CD4-positive, alpha-beta T cell (primary cell): ENCODE measurements at regions of chr11 and their contacts with region 1.

Region 1: DNA sequence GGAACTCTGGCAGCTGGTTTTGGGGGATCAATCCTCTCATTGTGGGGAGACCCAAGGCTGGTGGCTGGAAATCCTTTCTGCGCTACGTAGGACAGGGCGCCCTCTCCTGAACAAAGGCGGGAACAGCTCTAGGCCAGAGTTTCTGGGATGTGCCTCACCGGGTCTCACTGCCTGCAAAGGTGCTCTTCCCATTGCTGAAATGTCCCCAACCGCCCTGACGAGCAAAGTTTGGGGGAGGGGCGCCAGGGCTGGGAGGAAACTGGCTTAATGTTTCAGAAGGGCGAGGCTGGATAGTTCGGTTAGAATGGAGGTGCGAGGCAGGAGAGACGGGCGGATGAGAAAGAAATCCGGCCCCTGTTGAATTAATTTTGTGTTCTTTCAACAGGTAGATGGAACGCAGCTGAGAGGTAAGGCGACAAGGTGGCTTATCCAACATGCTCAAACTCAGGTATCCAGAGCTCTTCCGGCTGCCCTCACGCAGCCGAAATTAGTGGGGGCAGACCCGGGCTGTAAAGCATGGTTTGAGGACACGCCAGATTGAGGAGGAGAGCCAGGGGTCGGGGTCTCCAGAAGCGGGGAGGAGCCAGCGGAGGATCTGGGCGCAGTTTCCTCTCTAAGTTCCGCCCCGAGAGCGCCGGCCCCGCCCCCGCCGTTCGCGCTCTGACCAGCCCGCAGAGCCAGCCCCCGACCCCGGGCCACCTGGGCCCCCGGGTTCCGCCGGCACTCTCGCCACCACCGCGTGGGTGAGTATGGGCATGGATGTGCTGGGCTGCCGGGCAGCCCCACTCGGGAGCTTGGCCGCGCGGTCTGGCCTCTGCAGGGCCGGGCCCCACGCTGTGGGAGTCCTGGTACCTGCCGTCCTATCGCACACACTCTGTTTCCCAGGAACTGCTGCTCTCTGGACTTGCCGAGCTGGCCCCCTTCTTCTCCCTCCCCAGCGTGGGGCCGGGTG is at the start of gene PGAP2:
- DNase-seq: peak; percentile 27 to 77 (median 52)
- ATAC-seq: peak; percentile 74
- H3K4me3 ChIP-seq: peak within 1 kb of the TSS; percentile 96
- H3K4me3 Mint-ChIP-seq: peak within 1 kb of the TSS; percentile 95
- H3K27ac ChIP-seq: peak within 1 kb of the TSS in 1 of 2 donors; percentile 76
- H3K27ac Mint-ChIP-seq: peak within 1 kb of the TSS; percentile 84
- H3K4me1 ChIP-seq: peaks cover 21% of the 10 kb centered on the region
- H3K4me1 Mint-ChIP-seq: peaks cover 24% of the 10 kb centered on the region
- H3K27me3 ChIP-seq: no peaks in the 10 kb centered on the region
- H3K27me3 Mint-ChIP-seq: no peaks in the 10 kb centered on the region
- CTCF ChIP-seq: peak; percentile 63
- total RNA-seq, gene PGAP2: 20.9 to 23.6 TPM

Region 2: GRCh38 chr11:2791521-2792380 is 1016.4 kb before region 1 on chr11:
- CTCF ChIA-PET with region 1: no interaction called
- POLR2A ChIA-PET with region 1: no interaction called
- intact Hi-C with region 1: no loop called
- DNase-seq: peak in 12 of 14 experiments; percentile 6 to 55 (median 38)
- ATAC-seq: peak; percentile 46
- H3K4me3 ChIP-seq: peak overlapping the region; percentile 51
- H3K4me3 Mint-ChIP-seq: peak overlapping the region; percentile 71
- H3K27ac ChIP-seq: no peak overlapping the region
- H3K27ac Mint-ChIP-seq: no peak overlapping the region
- H3K4me1 ChIP-seq: peaks cover 13% of the 10 kb centered on the region
- H3K4me1 Mint-ChIP-seq: peaks cover 5% of the 10 kb centered on the region
- H3K27me3 ChIP-seq: no peaks in the 10 kb centered on the region
- H3K27me3 Mint-ChIP-seq: no peaks in the 10 kb centered on the region
- CTCF ChIP-seq: no peak

Region 3: GRCh38 chr11:3773180-3773579 is 35.0 kb before region 1 on chr11:
- CTCF ChIA-PET with region 1: interaction called, 10 read pairs
- POLR2A ChIA-PET with region 1: interaction called, 3 read pairs
- intact Hi-C with region 1: loop called in 1 of 2 experiments (anchors 5 kb)
- DNase-seq: no peak
- ATAC-seq: no peak
- H3K4me3 ChIP-seq: no peak overlapping the region
- H3K4me3 Mint-ChIP-seq: no peak overlapping the region
- H3K27ac ChIP-seq: no peak overlapping the region
- H3K27ac Mint-ChIP-seq: no peak overlapping the region
- H3K4me1 ChIP-seq: no peaks in the 10 kb centered on the region
- H3K4me1 Mint-ChIP-seq: no peaks in the 10 kb centered on the region
- H3K27me3 ChIP-seq: no peaks in the 10 kb centered on the region
- H3K27me3 Mint-ChIP-seq: no peaks in the 10 kb centered on the region
- CTCF ChIP-seq: no peak

Region 4: DNA sequence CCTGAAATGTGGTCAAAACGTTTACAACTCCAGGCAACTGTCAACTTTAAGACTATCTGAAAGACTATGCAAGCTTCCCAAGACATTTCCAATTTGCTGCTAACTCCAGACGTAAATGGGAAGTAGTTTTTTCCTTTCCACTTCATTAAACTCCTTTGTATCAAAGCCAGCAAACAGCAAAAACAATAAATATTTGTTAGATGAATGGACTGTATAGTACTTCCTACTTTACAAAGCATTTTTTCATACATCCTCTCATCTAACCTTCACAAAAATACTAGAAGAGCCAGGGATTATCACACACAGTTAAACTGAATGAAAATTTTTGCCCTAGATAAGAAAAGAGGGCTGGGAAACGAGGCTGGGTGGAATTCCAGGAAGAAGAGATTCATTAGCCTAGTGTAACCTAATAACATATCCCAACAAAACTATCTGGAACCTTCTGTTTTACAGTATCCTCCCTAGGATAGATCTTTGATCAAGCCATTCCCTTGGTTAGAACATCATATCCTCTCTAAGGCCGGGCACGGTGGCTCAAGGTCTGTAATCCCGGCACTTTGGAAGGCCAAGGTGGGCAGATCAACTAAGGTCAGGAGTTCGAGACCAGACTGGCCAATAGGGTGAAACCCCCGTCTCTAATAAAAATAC is 21.3 kb before region 1 on chr11:
- CTCF ChIA-PET with region 1: interaction called, 37 read pairs
- POLR2A ChIA-PET with region 1: interaction called, 12 read pairs
- intact Hi-C with region 1: loop called in 1 of 2 experiments (anchors 1 kb)
- DNase-seq: no peak
- ATAC-seq: no peak
- H3K4me3 ChIP-seq: no peak overlapping the region
- H3K4me3 Mint-ChIP-seq: peak overlapping the region; percentile 22
- H3K27ac ChIP-seq: peak overlapping the region in 1 of 2 donors; percentile 23
- H3K27ac Mint-ChIP-seq: peak overlapping the region; percentile 85
- H3K4me1 ChIP-seq: peaks cover 52% of the 10 kb centered on the region
- H3K4me1 Mint-ChIP-seq: peaks cover 73% of the 10 kb centered on the region
- H3K27me3 ChIP-seq: no peaks in the 10 kb centered on the region
- H3K27me3 Mint-ChIP-seq: no peaks in the 10 kb centered on the region
- CTCF ChIP-seq: no peak

Region 5: GRCh38 chr11:3824714-3825472 is 16.7 kb after region 1 on chr11:
- CTCF ChIA-PET with region 1: interaction called, 11 read pairs
- POLR2A ChIA-PET with region 1: interaction called, 3 read pairs
- intact Hi-C with region 1: no loop called
- DNase-seq: peak; percentile 69 to 90 (median 80)
- ATAC-seq: peak; percentile 100
- H3K4me3 ChIP-seq: no peak overlapping the region
- H3K4me3 Mint-ChIP-seq: no peak overlapping the region
- H3K27ac ChIP-seq: peak overlapping the region in 1 of 2 donors; percentile 10
- H3K27ac Mint-ChIP-seq: peak overlapping the region; percentile 77
- H3K4me1 ChIP-seq: peaks cover 30% of the 10 kb centered on the region
- H3K4me1 Mint-ChIP-seq: peaks cover 38% of the 10 kb centered on the region
- H3K27me3 ChIP-seq: no peaks in the 10 kb centered on the region
- H3K27me3 Mint-ChIP-seq: no peaks in the 10 kb centered on the region
- CTCF ChIP-seq: peak; percentile 75

Region 6: GRCh38 chr11:3849297-3849874 is 41.2 kb after region 1 on chr11:
- CTCF ChIA-PET with region 1: interaction called, 18 read pairs
- POLR2A ChIA-PET with region 1: interaction called, 24 read pairs
- intact Hi-C with region 1: no loop called
- DNase-seq: peak in 7 of 14 experiments; percentile 34 to 82 (median 69)
- ATAC-seq: peak; percentile 47
- H3K4me3 ChIP-seq: no peak overlapping the region
- H3K4me3 Mint-ChIP-seq: peak overlapping the region; percentile 1
- H3K27ac ChIP-seq: no peak overlapping the region
- H3K27ac Mint-ChIP-seq: peak overlapping the region; percentile 70
- H3K4me1 ChIP-seq: peaks cover 30% of the 10 kb centered on the region
- H3K4me1 Mint-ChIP-seq: peaks cover 45% of the 10 kb centered on the region
- H3K27me3 ChIP-seq: no peaks in the 10 kb centered on the region
- H3K27me3 Mint-ChIP-seq: no peaks in the 10 kb centered on the region
- CTCF ChIP-seq: peak; percentile 79